ENCODE measurements at regions of chr19 and their contacts with region 1.

Region 1: DNA sequence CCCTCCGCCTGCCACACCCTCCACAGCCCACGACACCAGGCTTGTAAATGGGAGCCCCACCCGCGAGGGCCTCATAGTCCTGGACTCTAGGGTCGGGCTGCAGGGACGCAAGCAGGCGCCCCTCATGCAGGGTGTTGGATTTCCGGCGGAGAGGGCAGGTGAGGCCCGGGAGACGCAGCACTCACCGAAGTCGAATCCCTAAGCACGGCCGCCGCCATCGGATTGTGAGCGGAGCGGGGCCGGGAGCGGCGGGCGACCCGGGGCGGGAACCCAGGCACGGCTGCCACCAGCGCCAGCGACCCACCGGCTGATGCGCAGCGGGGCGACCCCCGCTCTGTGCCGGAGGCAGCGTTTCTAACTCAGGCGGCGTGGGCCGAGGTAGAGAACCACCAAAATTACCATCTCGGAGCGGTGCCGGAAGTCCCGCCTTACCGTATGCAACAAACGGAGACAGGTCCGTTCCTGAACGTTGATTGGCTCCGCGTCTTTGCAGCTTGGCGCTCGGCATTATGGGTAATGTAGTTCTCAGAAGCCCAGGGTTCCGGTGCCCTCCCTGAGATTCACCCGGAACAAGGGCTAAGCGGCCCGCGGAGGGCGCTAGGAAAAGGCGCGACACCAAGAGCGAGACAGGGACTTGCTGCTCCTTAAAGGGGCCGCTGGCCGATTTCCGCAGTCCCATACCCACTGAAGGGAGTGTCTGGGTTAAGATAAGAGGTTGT is at the start of gene ZNF416:
- DNase-seq: peak; percentile 96 to 98
- ATAC-seq: peak; percentile 98 to 100 (median 100)
- H3K4me3 ChIP-seq: peak within 1 kb of the TSS; percentile 100
- H3K27ac ChIP-seq: peak within 1 kb of the TSS; percentile 76
- H3K4me1 ChIP-seq: peaks cover 16% of the 10 kb centered on the region
- H3K27me3 ChIP-seq: no peaks in the 10 kb centered on the region
- CTCF ChIP-seq: peak; percentile 17
- total RNA-seq, gene ZNF416: 2.1 to 4.0 (median 2.4) TPM

Region 2: DNA sequence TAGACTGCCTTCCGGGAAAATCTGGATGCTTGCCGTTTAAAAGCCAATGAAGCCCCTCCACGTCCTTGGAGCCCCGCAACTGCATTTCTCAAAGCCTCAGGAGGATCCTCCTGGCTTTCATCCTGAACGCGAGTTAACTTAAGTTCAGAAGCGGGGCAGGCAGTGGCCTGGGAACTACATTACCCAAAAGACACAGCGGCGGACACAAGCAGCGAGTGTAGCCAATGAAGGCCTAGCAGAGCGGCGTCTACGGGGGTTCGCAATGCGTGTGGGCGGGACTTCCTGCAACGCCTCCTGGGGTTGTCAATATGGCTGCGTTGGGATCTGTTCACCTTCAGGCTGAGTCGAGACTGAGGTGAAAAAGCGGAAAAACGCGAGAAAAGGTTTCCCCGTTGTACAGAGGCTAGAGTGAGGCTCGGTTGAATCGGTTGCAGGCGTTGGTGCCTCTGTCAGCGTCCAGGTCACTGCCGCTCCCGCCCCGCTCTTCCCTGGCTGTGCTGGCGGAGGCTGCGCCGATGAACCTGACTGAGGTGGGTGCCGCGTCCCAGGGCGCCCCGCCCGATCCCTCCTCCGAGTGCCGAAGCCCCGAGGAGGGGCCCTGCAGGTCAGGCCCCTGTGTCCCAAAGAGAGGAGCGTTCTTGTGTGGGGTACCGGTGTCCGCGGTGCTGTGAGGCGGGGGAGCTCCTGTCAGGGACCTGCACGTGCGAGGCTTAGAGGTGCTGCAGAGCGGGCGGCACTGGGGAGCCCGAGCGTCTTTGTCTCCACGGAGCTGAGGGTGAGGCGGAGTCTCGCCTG is 167.6 kb before region 1 on chr19 and contains the start of gene ZNF17:
- intact Hi-C with region 1: no loop called
- DNase-seq: peak; percentile 93 to 97
- ATAC-seq: peak; percentile 100
- H3K4me3 ChIP-seq: peak within 1 kb of the TSS; percentile 99
- H3K27ac ChIP-seq: peak within 1 kb of the TSS; percentile 78
- H3K4me1 ChIP-seq: peaks cover 7% of the 10 kb centered on the region
- H3K27me3 ChIP-seq: no peaks in the 10 kb centered on the region
- CTCF ChIP-seq: no peak
- total RNA-seq, gene ZNF17: 4.8 to 11.0 (median 6.3) TPM

Region 3: DNA sequence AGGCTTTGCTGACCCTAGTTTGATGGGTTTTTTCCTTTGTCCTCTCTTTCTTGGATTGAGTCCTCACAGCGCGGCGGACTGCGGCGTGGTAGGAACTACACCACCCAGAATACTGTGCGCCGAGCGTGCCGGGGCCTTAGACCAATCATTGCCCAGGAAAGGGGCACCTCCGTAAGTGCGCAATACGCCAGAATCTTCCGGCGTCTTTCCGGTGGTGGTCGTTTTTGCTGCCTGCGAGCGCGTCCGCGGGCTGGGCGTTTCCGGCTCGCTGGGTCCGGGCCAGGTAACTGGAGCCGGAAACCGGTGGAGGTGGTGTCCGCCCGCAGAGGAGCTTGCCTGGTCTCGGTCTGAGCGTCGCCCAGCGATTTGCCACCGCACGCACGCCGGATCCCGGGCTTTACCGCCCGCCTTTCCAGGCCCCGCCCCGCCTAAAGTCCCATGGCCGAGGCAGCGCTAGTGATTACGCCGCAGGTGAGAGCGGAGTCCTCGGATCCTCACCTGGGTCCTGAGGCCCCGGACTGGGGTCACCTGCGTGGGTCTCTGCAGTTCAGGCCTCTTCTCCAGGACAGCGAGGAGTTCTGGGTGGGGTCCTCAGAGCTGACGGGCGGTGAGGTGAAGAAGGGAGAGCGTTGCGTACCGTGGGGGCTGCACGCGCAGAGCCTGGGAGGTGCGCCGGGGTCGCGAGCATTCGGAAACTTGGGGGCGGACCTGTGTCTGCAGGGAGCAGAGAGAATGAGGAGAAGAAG is 51.3 kb before region 1 on chr19 and contains the start of gene ZNF549:
- intact Hi-C with region 1: loop called in 1 of 2 experiments (anchors 5 kb)
- DNase-seq: peak; percentile 92 to 95
- ATAC-seq: peak; percentile 100
- H3K4me3 ChIP-seq: peak within 1 kb of the TSS; percentile 99
- H3K27ac ChIP-seq: peak within 1 kb of the TSS; percentile 87
- H3K4me1 ChIP-seq: peaks cover 5% of the 10 kb centered on the region
- H3K27me3 ChIP-seq: no peaks in the 10 kb centered on the region
- CTCF ChIP-seq: no peak
- total RNA-seq, gene ZNF549: 1.5 to 4.0 (median 2.3) TPM

Region 4: DNA sequence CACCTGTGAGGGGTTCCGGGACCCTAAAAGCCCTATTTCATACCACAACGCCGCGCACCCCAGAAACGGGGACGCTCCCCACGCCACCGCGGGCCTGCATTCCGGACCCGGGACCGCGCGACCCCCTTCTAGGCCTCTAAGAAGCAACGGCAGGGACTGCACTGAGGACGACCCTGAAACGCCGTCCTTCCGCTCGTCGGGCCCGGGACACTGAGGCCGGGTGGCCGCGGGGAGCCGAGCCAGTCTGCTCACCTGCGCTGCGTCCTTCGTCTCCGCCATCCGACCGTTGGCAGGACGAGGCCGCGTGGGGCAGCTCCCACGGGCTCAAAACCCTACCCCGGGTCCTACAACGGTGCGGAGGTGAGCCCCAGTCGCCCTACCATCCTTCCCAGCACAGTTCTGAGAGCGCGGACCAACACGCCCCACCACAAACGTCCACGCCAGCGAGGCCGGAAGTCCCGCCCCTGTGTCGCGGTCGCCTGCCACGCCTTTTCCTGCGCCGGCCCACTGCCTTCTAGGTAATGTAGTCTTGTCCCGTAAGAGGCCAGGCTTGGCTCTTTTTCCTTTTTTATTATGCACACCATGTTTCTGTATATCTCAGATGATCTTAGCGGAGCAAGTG is 19.1 kb before region 1 on chr19 and contains the start of gene ZNF550:
- intact Hi-C with region 1: loop called in 1 of 2 experiments (anchors 1 kb)
- DNase-seq: peak; percentile 91 to 95
- ATAC-seq: peak; percentile 99 to 100 (median 100)
- H3K4me3 ChIP-seq: peak within 1 kb of the TSS; percentile 96
- H3K27ac ChIP-seq: peak within 1 kb of the TSS; percentile 68
- H3K4me1 ChIP-seq: peaks cover 11% of the 10 kb centered on the region
- H3K27me3 ChIP-seq: no peaks in the 10 kb centered on the region
- CTCF ChIP-seq: no peak
- total RNA-seq, gene ZNF550: 2.1 to 4.9 (median 4.6) TPM